Aorta (tissue), 5 donors: ENCODE measurements at regions of chr1 and their contacts with region 1.

Region 1: DNA sequence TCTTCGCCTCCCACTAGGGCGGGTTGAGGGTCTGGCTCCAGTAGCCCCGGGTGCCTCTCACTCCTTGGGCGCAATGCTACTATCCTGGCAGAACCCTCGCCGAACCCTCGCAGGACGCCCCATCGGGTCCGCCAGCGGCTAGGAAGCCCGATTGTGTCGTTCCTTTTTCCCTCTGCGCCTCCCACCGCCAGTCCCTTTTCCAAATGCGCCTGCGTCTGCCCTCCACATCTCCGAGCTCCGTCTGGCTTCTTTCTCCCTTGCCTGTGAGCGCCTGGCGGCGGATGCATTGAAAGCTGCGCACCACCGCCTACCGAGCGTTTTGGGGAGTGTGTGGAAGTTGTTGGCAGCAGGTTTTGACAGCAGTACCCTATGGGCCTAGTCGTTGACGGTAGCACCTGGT is 1.0 kb upstream of the DIRAS3 start:
- DNase-seq: peak; percentile 62 to 85
- ATAC-seq: peak; percentile 77
- H3K4me3 ChIP-seq: no peak overlapping the region
- H3K27ac ChIP-seq: no peak overlapping the region
- H3K4me1 ChIP-seq: no peaks in the 10 kb centered on the region
- H3K27me3 ChIP-seq: no peaks in the 10 kb centered on the region

Region 2: GRCh38 chr1:67766141-67766978 is 285.1 kb before region 1 on chr1:
- intact Hi-C with region 1: loop called in 1 of 2 experiments (anchors 5 kb)
- DNase-seq: peak; percentile 63 to 83
- ATAC-seq: peak; percentile 76
- H3K4me3 ChIP-seq: no peak overlapping the region
- H3K27ac ChIP-seq: peak overlapping the region in 1 of 2 donors; percentile 22
- H3K4me1 ChIP-seq: peaks cover 0 to 5% of the 10 kb centered on the region in 2 donors
- H3K27me3 ChIP-seq: no peaks in the 10 kb centered on the region

Region 3: GRCh38 chr1:67853704-67854103 is 197.8 kb before region 1 on chr1:
- intact Hi-C with region 1: loop called (anchors 5 to 10 kb)
- DNase-seq: peak; percentile 54 to 79
- ATAC-seq: no peak
- H3K4me3 ChIP-seq: no peak overlapping the region
- H3K27ac ChIP-seq: no peak overlapping the region
- H3K4me1 ChIP-seq: peaks cover 2 to 3% of the 10 kb centered on the region in 2 donors
- H3K27me3 ChIP-seq: no peaks in the 10 kb centered on the region

Region 4: DNA sequence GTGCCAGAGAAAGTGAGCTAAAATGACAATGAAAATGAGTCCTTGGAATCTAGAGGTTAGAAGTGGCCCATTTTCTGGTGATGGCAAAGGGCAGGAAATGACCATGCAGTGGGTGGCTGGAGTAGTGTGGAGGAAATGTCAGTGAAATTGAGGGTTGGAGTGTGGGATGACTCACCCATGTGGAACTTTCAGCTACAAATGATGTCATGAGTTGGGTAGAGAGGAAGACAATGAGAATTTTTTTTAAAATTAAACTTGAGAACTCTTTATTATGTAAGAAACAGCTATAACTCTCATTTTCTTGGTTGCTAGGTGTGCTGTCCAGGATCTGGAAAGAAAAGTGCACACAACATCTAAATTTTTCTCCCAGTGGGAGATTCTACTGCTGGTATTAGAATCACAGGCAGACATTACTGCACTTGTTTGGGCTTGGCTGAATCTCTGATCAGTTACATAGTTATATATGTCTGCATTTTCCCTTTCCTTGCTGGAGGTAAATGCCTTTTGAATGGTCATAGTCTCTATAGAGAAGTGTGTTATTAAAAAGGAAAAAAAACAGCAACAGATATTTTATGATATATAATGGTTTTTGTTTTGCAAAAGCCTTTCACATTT is 161.4 kb before region 1 on chr1:
- intact Hi-C with region 1: no loop called
- DNase-seq: no peak
- ATAC-seq: peak; percentile 54
- H3K4me3 ChIP-seq: no peak overlapping the region
- H3K27ac ChIP-seq: no peak overlapping the region
- H3K4me1 ChIP-seq: no peaks in the 10 kb centered on the region
- H3K27me3 ChIP-seq: no peaks in the 10 kb centered on the region